ENCODE measurements at regions of chr7 and their contacts with region 1.

Region 1: DNA sequence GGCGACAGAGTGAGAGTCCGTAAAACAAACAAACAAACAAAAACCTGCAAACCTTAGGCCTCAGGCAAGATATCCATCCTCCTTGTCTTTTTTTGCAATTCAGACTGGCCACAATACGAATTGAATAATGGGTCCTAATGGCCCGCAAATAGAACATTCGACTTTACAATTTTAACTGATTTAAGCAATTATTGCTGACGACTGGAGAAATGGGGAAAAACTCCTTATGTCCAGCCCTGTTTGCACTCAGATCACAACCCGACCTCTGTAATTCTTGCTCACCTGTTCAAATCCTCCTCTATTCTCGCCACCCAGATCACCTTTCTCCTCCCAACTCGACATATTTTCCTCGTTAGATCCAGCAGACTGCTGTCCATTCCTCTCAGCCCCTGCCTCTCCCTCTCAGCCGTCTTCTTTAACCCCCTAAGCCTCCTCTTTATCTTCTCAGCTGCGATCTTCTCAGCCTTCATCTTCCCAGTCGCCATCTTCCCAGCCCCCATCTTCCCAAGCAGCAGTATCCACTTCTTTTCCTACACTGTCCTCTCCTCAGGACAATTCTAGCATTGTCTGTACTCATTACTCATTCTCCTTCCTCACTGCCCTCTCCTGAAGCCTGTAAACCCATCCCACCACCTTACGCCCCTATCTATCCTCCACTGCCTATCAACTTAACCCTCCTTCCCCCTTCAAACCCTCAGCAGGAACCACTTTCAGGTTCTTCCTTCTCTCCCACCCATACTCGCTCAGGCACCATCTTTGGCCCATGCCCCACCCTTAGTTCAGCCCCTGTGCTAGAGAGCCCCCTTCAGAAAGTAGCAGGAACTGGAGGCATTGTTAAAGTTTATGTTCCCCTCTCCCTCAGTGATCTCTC is 61.8 kb downstream of the LRRC17 start:
- DNase-seq: peak; percentile 63 to 76 (median 66)
- ATAC-seq: peak; percentile 69
- H3K4me3 ChIP-seq: peak overlapping the region; percentile 82
- H3K27ac ChIP-seq: peak overlapping the region; percentile 99
- H3K4me1 ChIP-seq: peaks cover 11 to 18% of the 10 kb centered on the region in 2 experiments; a peak in 4 of 5 replicates
- H3K27me3 ChIP-seq: no peaks in the 10 kb centered on the region
- CTCF ChIP-seq: peak; percentile 59 to 67 (median 60)
- EP300 ChIP-seq: no peak
- POLR2A ChIP-seq: peak; percentile 65; the same call in 1 of the 2 replicates
- RAD21 ChIP-seq: peak; percentile 48 to 66

Region 2: GRCh38 chr7:102991540-102992214 is 17.1 kb after region 1 on chr7:
- CTCF ChIA-PET with region 1: no interaction called
- POLR2A ChIA-PET with region 1: interaction called, 3 read pairs
- in situ Hi-C with region 1: no loop called
- intact Hi-C with region 1: loop called (anchors 1 kb)
- DNase-seq: peak; percentile 83 to 87 (median 84)
- ATAC-seq: peak; percentile 79
- H3K4me3 ChIP-seq: no peak overlapping the region
- H3K27ac ChIP-seq: peak overlapping the region; percentile 89
- H3K4me1 ChIP-seq: peaks cover 23 to 67% of the 10 kb centered on the region in 2 experiments
- H3K27me3 ChIP-seq: no peaks in the 10 kb centered on the region
- CTCF ChIP-seq: no peak
- EP300 ChIP-seq: peak; percentile 82
- POLR2A ChIP-seq: peak; percentile 70
- RAD21 ChIP-seq: 0 out of 4 replicates have a peak, but pooled peaks of 1 of the 2 experiments have one; percentile 23

Region 3: GRCh38 chr7:103037476-103037822 is 62.8 kb after region 1 on chr7:
- CTCF ChIA-PET with region 1: no interaction called
- POLR2A ChIA-PET with region 1: interaction called, 5 read pairs
- in situ Hi-C with region 1: no loop called
- intact Hi-C with region 1: loop called (anchors 5 kb)
- DNase-seq: peak in 1 of 4 experiments; percentile 52
- ATAC-seq: peak; percentile 81
- H3K4me3 ChIP-seq: 0 out of 2 replicates have a peak overlapping the region, but pooled peaks have one; percentile 29
- H3K27ac ChIP-seq: peak overlapping the region; percentile 82
- H3K4me1 ChIP-seq: peaks cover 6 to 15% of the 10 kb centered on the region in 2 experiments; a peak in 4 of 5 replicates
- H3K27me3 ChIP-seq: no peaks in the 10 kb centered on the region
- CTCF ChIP-seq: no peak
- EP300 ChIP-seq: no peak
- POLR2A ChIP-seq: no peak
- RAD21 ChIP-seq: no peak

Region 4: DNA sequence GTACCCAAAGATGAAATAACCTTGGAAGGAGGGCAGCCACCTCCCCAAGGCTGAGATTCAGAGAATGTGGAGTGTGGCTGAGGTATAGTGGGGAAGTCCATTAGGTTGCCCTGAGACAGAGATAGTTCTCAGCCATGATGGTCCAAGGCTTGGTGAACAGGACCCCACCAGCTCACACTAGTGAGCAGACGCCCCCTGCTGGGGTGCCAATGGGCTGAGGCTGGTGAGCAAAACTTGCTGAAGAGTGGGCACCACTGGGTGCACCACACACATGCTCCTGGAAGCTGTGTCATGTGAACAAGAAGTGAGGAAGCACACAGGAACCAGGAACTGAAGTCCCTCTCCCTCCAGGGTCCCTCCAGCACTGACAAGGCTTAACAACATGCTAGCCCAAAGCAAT is 91.1 kb after region 1 on chr7:
- CTCF ChIA-PET with region 1: no interaction called
- POLR2A ChIA-PET with region 1: interaction called, 3 read pairs
- in situ Hi-C with region 1: no loop called
- intact Hi-C with region 1: loop called (anchors 2 kb)
- DNase-seq: peak; percentile 34 to 69 (median 48)
- ATAC-seq: peak; percentile 82
- H3K4me3 ChIP-seq: no peak overlapping the region
- H3K27ac ChIP-seq: no peak overlapping the region
- H3K4me1 ChIP-seq: no peaks in the 10 kb centered on the region
- H3K27me3 ChIP-seq: no peaks in the 10 kb centered on the region
- CTCF ChIP-seq: peak; percentile 65 to 83 (median 71)
- EP300 ChIP-seq: no peak
- POLR2A ChIP-seq: no peak
- RAD21 ChIP-seq: peak; percentile 39 to 74; a peak in 3 of 4 replicates

Measured in K562 (cell line).